Activated CD8-positive, alpha-beta memory T cell treated with anti-CD3 and anti-CD28 coated beads, Interleukin-2, amount 10 ng/mL, durations not matched to agents 7 days and 5 days (primary cell): ENCODE measurements at regions of chr7 and their contacts with region 1.

Region 1: GRCh38 chr7:102272075-102272917 is 14.4 kb upstream of the SH2B2 start:
- DNase-seq: peak; percentile 78
- ATAC-seq: peak; percentile 84
- H3K4me3 Mint-ChIP-seq: no peak overlapping the region
- H3K27ac Mint-ChIP-seq: no peak overlapping the region
- H3K4me1 Mint-ChIP-seq: no peaks in the 10 kb centered on the region
- H3K27me3 Mint-ChIP-seq: no peaks in the 10 kb centered on the region

Region 2: GRCh38 chr7:101165075-101165957 is 1107.0 kb before region 1 on chr7 and contains the start of gene VGF:
- CTCF ChIA-PET with region 1: no interaction called
- DNase-seq: peak; percentile 95
- ATAC-seq: peak; percentile 85
- H3K4me3 Mint-ChIP-seq: peak within 1 kb of the TSS; percentile 46
- H3K27ac Mint-ChIP-seq: no peak within 1 kb of the TSS
- H3K4me1 Mint-ChIP-seq: peaks cover 38% of the 10 kb centered on the region
- H3K27me3 Mint-ChIP-seq: peaks cover 62% of the 10 kb centered on the region
- total RNA-seq, gene VGF: 0.44 to 0.66 TPM

Region 3: DNA sequence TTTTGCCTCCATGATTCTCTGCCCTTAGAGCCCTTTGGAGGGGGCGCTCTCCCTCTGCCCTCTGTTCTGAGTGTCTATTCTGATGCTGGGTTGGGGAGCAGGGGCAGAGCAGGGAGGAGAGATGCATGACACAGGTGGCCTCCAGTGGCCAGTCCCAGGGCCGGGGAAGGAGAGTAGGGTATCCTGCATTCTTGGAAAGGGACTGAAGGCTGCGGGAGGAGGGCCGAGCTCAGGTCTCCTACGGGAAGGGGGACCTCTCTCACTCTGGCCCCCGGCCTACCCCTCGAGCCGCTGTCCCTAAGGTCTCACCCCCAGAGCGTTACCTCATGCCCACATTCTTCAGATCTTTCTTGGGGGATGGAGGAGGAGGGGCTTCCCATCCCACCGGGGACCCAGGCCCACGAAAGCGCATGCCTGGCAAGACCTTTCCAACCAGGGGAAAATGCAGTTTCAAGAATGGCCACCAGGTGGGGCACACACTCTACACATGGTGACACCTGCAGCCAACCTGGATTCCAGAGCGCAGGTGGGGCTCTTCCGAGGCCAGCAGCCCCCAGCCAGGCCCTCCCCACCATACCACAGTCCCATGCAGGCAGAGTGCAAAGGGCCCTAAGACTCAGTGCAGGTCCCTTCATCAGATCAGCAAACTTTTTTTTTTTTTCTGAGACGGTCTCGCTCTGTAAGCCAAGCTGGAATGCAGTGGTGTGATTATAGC is 729.6 kb before region 1 on chr7:
- CTCF ChIA-PET with region 1: interaction called, 12 read pairs
- DNase-seq: peak; percentile 78
- ATAC-seq: peak; percentile 63
- H3K4me3 Mint-ChIP-seq: no peak overlapping the region
- H3K27ac Mint-ChIP-seq: no peak overlapping the region
- H3K4me1 Mint-ChIP-seq: no peaks in the 10 kb centered on the region
- H3K27me3 Mint-ChIP-seq: no peaks in the 10 kb centered on the region

Region 4: GRCh38 chr7:102425639-102426267 is 153.5 kb after region 1 on chr7:
- CTCF ChIA-PET with region 1: no interaction called
- DNase-seq: peak; percentile 93
- ATAC-seq: peak; percentile 87
- H3K4me3 Mint-ChIP-seq: peak overlapping the region; percentile 77
- H3K27ac Mint-ChIP-seq: peak overlapping the region; percentile 99
- H3K4me1 Mint-ChIP-seq: peaks cover 65% of the 10 kb centered on the region
- H3K27me3 Mint-ChIP-seq: no peaks in the 10 kb centered on the region